ENCODE measurements at regions of chr7 and their contacts with region 1.

Region 1: GRCh38 chr7:28408960-28409715 is 3.2 kb upstream of the CREB5 start:
- DNase-seq: peak; percentile 95
- ATAC-seq: peak; percentile 87

Region 2: DNA sequence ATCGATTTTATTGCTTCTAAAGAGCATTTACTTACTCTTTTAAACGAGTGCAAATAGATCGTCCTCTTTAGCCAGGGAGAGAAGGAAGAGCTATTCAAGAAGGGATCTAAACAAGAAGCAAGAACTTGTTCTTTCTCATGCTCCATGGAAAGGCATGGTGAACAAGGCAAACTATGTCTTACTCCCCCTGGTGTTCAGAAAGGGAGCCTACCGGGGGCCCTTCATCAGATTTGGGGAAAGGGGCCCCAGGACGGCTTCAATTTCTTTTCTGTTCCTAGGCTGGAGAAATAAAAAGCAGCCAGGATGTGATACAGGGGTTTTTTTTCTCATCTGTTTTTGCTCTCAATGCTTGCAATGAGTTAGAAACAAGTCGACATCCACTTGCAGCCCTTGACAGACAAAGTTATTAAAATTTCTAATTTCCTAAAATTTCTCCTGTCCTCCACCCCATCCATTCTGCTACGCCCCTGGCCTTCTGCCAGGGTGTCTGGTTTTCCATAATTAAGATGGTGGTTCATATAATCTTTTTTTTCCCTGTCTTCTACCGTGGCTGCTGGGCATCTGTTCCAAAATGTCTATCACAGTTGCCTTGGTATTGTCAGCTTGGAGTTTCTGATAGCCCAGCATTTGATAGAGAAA is 217.6 kb after region 1 on chr7:
- intact Hi-C with region 1: loop called (anchors 5 kb)
- DNase-seq: peak; percentile 37
- ATAC-seq: peak; percentile 22

Region 3: GRCh38 chr7:28855538-28856217 is 446.5 kb after region 1 on chr7:
- intact Hi-C with region 1: no loop called
- DNase-seq: no peak
- ATAC-seq: no peak